ENCODE measurements at regions of chr12 and their contacts with region 1.

Region 1: GRCh38 chr12:24360907-24361306 is 411.4 kb upstream of the SOX5 start:
- DNase-seq: no peak
- ATAC-seq: no peak
- H3K4me3 ChIP-seq: no peak overlapping the region
- H3K27ac ChIP-seq: no peak overlapping the region
- H3K4me1 ChIP-seq: no peaks in the 10 kb centered on the region
- H3K27me3 ChIP-seq: no peaks in the 10 kb centered on the region
- CTCF ChIP-seq: no peak
- POLR2A ChIP-seq: no peak

Region 2: DNA sequence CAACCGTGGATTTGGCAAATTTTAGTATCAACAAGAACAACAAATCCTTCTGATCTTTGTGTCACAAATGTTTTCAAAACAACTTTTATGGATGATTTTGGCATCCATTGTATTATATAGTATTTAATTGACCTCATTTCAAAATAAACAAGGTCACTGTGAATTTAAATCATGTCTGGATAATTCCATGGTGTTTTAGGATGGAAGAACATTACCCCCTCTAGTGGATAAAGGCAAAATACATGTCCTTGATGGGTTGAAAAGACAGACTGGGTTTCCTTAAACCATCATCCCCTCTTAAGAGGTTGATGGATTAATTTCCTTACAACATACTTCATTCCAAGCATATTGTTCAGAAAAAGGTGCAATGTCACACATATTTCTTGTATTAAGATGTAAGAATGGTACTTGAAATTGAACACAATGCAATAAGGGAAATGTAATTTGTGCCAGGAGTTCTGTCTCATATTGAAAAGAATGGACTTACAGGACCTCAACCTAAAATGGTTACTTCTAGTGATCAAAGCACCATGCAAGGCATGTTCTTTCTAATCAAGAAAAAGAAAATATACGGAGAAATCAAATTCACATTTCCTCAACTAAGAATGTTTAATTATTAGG is 236.0 kb after region 1 on chr12:
- in situ Hi-C with region 1: loop called in 1 of 4 experiments (anchors 10 kb)
- intact Hi-C with region 1: no loop called
- DNase-seq: no peak
- ATAC-seq: no peak
- H3K4me3 ChIP-seq: no peak overlapping the region
- H3K27ac ChIP-seq: no peak overlapping the region
- H3K4me1 ChIP-seq: no peaks in the 10 kb centered on the region
- H3K27me3 ChIP-seq: no peaks in the 10 kb centered on the region
- CTCF ChIP-seq: peak in 2 of 5 experiments; percentile 8 to 45
- POLR2A ChIP-seq: no peak